ENCODE measurements at regions of chr1 and their contacts with region 1.

Region 1: GRCh38 chr1:32448773-32449456 is 16.0 kb upstream of the ZBTB8B start:
- DNase-seq: peak in 1 of 2 experiments; percentile 78
- H3K4me3 ChIP-seq: no peak overlapping the region
- H3K27ac ChIP-seq: no peak overlapping the region
- H3K4me1 ChIP-seq: peaks cover 0 to 6% (median 2%) of the 10 kb centered on the region in 4 experiments; a peak in 4 of 7 replicates
- H3K27me3 ChIP-seq: no peaks in the 10 kb centered on the region
- CTCF ChIP-seq: peak; percentile 16 to 41 (median 35); a peak in 2 of 4 replicates
- EP300 ChIP-seq: no peak
- POLR2A ChIP-seq: no peak
- RAD21 ChIP-seq: peak; percentile 34 to 51; a peak in 3 of 4 replicates

Region 2: DNA sequence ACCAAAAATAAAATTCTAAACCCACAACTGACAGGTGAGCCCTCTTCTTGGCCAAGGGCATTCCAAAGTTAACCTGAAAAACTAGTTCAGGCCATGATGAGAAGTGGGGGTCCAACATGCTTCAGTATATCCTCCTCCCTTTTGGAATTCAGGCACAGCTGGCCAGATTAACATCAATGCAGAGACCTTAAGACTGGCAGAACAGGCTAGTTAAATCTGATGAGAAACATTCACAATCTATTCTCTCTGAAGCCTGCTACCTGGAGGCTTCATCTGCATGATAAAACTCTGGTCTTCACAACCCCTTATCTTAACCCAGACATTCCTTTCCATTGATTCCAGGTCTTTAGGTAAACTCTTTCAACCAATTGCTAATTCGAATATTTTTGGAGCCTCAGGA is 10.8 kb before region 1 on chr1:
- CTCF ChIA-PET with region 1: interaction called, 10 read pairs
- POLR2A ChIA-PET with region 1: no interaction called
- DNase-seq: peak; percentile 57 to 66
- H3K4me3 ChIP-seq: peak overlapping the region in 1 of 4 experiments; percentile 14; a peak in 1 of 8 replicates
- H3K27ac ChIP-seq: peak overlapping the region; percentile 80
- H3K4me1 ChIP-seq: peaks cover 0 to 6% (median 2%) of the 10 kb centered on the region in 4 experiments; a peak in 3 of 7 replicates
- H3K27me3 ChIP-seq: no peaks in the 10 kb centered on the region
- CTCF ChIP-seq: no peak
- EP300 ChIP-seq: no peak
- POLR2A ChIP-seq: no peak
- RAD21 ChIP-seq: no peak

Region 3: DNA sequence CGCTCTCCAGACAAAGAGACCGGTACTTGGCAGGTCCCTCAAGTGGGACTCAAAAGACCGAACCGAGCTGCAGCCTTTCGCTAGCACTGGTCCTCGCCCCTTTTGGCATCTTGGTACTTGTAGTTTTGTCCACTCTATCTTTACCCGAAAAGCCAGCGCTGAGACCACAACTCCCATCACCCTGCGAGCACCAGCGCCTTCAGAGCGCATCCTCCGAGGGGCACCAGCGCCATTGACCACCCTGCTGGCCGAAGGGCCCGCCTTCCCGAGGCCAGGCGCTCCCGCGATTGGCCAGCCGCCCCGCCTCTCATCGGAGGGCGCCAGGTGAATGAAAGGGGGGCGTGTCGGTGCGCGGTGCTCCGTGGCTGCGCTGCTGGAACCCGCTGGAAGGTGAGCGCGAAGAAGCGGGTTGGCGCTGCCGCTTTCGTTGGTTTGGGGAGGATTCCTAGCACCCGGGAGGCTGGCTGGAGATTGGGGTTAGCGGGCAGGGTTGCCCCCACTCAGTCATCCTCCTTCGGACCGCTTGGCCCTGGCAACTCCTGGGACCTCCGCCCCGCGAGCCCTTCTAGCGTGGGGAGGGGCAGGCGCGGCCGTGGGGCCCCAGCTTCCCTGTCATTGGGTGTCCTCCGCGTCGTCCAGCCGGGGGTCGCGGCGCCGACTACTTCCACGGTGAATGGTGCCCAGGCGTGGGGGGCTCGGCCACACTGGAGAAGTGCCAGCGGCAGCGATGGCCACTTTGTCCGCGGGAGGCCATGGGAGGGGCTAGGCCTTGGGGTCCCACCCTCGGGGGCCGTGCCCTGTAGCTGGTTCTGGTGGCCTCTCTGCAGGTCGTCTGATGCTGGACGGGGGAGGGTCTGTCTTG is 16.0 kb after region 1 on chr1 and contains the start of gene ZBTB8B:
- CTCF ChIA-PET with region 1: interaction called, 11 read pairs
- POLR2A ChIA-PET with region 1: interaction called, 3 read pairs
- DNase-seq: peak; percentile 94 to 98
- H3K4me3 ChIP-seq: peak within 1 kb of the TSS; percentile 72 to 86 (median 82)
- H3K27ac ChIP-seq: no peak within 1 kb of the TSS
- H3K4me1 ChIP-seq: peaks cover 0 to 4% (median 2%) of the 10 kb centered on the region in 4 experiments; a peak in 2 of 7 replicates
- H3K27me3 ChIP-seq: no peaks in the 10 kb centered on the region
- CTCF ChIP-seq: no peak
- EP300 ChIP-seq: no peak
- POLR2A ChIP-seq: peak in 1 of 2 experiments; percentile 66; a peak in 1 of 3 replicates
- RAD21 ChIP-seq: no peak
- total RNA-seq, gene ZBTB8B: 3.5 and 3.7 TPM in 2 replicates